CD4-positive, alpha-beta memory T cell (primary cell): ENCODE measurements at regions of chr1 and their contacts with region 1.

Region 1: DNA sequence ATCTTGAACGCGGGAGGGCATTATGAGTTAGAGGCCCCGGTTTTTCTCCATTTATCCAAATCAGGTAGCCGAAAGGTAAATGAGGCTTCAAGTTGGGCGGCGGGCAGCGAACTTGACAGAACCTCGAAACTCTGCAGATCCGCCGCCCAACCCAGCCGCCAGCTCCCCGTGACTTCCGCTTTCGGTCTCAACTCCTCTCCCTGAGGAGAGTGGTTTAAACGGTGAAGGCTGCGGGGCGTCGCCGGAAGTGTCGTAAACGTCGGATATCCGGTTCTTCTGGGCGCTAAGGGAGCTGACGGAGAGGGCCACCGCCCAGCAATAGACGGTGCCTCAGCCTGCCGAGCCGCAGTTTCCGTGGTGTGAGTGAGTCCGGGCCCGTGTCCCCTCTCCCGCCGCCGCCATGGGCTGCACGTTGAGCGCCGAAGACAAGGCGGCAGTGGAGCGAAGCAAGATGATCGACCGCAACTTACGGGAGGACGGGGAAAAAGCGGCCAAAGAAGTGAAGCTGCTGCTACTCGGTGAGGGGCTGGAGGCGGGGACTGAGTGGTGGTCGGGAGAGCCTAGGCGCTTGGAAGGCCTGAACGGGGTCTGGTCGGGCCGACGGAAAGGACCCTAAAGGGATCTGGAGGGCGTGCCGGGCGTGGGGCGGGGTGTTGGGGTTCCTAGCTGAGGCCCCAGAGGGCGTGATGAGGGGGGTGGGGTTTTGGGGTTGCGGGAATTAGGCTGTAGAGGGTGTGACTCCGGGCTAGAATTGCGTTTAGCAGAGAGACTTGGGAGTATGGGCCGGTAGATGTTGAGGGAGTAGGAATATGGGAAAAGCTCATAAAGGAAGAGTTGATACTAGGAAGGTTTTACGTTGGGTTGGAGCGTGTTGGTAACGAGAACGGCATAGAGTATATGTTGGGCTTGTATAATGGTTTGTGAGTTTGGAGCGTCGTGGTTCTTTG is at the start of gene GNAI3:
- DNase-seq: peak; percentile 94 to 99 (median 96)
- H3K4me3 ChIP-seq: peak within 1 kb of the TSS; percentile 94 to 99
- H3K4me3 Mint-ChIP-seq: peak within 1 kb of the TSS; percentile 93 to 100 (median 98)
- H3K27ac ChIP-seq: peak within 1 kb of the TSS; percentile 97
- H3K27ac Mint-ChIP-seq: peak within 1 kb of the TSS; percentile 92 to 100 (median 99)
- H3K4me1 ChIP-seq: peaks cover 60% of the 10 kb centered on the region
- H3K4me1 Mint-ChIP-seq: peaks cover 41 to 65% (median 49%) of the 10 kb centered on the region in 4 donors
- H3K27me3 ChIP-seq: no peaks in the 10 kb centered on the region
- H3K27me3 Mint-ChIP-seq: no peaks in the 10 kb centered on the region
- total RNA-seq, gene GNAI3: 7.7 to 8.1 TPM

Region 2: GRCh38 chr1:109426278-109427170 is 122.1 kb before region 1 on chr1 and contains the start of gene PSMA5:
- CTCF ChIA-PET with region 1: interaction called, 3 read pairs
- POLR2A ChIA-PET with region 1: interaction called, 22 read pairs
- intact Hi-C with region 1: loop called (anchors 1 kb)
- DNase-seq: peak; percentile 93 to 99 (median 96)
- H3K4me3 ChIP-seq: peak within 1 kb of the TSS; percentile 96 to 98
- H3K4me3 Mint-ChIP-seq: peak within 1 kb of the TSS; percentile 94 to 99 (median 98)
- H3K27ac ChIP-seq: peak within 1 kb of the TSS; percentile 87
- H3K27ac Mint-ChIP-seq: peak within 1 kb of the TSS; percentile 90 to 99 (median 98)
- H3K4me1 ChIP-seq: peaks cover 44% of the 10 kb centered on the region
- H3K4me1 Mint-ChIP-seq: peaks cover 22 to 50% (median 37%) of the 10 kb centered on the region in 4 donors
- H3K27me3 ChIP-seq: no peaks in the 10 kb centered on the region
- H3K27me3 Mint-ChIP-seq: no peaks in the 10 kb centered on the region
- total RNA-seq, gene PSMA5: 87.7 to 90.2 TPM

Region 3: GRCh38 chr1:109509176-109510134 is 39.1 kb before region 1 on chr1 and contains the start of gene AMIGO1:
- CTCF ChIA-PET with region 1: interaction called, 6 read pairs
- POLR2A ChIA-PET with region 1: interaction called, 12 read pairs
- intact Hi-C with region 1: no loop called
- DNase-seq: peak; percentile 65 to 73 (median 68)
- H3K4me3 ChIP-seq: peak within 1 kb of the TSS; percentile 55 to 82
- H3K4me3 Mint-ChIP-seq: peak within 1 kb of the TSS; percentile 92 to 95 (median 94)
- H3K27ac ChIP-seq: peak within 1 kb of the TSS; percentile 54
- H3K27ac Mint-ChIP-seq: peak within 1 kb of the TSS; percentile 85 to 97 (median 95)
- H3K4me1 ChIP-seq: peaks cover 59% of the 10 kb centered on the region
- H3K4me1 Mint-ChIP-seq: peaks cover 48 to 73% (median 60%) of the 10 kb centered on the region in 4 donors
- H3K27me3 ChIP-seq: no peaks in the 10 kb centered on the region
- H3K27me3 Mint-ChIP-seq: no peaks in the 10 kb centered on the region
- total RNA-seq, gene AMIGO1: 28.1 to 29.3 TPM

Region 4: DNA sequence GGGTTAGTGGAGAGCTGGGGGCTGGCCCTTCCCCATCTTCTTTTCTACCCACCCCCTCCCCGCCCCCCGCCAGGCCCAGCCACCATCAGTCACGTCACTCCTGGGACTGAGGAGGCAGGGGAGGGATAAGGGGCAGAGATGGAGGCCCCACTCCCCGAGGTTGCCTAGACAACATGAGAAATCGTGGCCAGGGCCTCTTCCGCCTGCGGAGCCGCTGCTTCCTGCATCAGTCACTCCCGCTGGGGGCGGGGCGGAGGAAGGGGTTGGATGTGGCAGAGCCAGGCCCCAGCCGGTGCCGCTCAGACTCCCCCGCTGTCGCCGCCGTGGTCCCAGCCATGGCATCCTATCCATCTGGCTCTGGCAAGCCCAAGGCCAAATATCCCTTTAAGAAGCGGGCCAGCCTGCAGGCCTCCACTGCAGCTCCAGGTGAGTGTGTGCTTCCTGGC is 72.3 kb after region 1 on chr1:
- CTCF ChIA-PET with region 1: interaction called, 314 read pairs
- POLR2A ChIA-PET with region 1: interaction called, 114 read pairs
- intact Hi-C with region 1: loop called (anchors 1 kb)
- DNase-seq: peak; percentile 96 to 99 (median 97)
- H3K4me3 ChIP-seq: peak overlapping the region; percentile 76 to 93
- H3K4me3 Mint-ChIP-seq: peak overlapping the region; percentile 92 to 99 (median 96)
- H3K27ac ChIP-seq: peak overlapping the region; percentile 96
- H3K27ac Mint-ChIP-seq: peak overlapping the region; percentile 91 to 99 (median 99)
- H3K4me1 ChIP-seq: peaks cover 72% of the 10 kb centered on the region
- H3K4me1 Mint-ChIP-seq: peaks cover 47 to 86% (median 58%) of the 10 kb centered on the region in 4 donors
- H3K27me3 ChIP-seq: no peaks in the 10 kb centered on the region
- H3K27me3 Mint-ChIP-seq: no peaks in the 10 kb centered on the region

Region 5: DNA sequence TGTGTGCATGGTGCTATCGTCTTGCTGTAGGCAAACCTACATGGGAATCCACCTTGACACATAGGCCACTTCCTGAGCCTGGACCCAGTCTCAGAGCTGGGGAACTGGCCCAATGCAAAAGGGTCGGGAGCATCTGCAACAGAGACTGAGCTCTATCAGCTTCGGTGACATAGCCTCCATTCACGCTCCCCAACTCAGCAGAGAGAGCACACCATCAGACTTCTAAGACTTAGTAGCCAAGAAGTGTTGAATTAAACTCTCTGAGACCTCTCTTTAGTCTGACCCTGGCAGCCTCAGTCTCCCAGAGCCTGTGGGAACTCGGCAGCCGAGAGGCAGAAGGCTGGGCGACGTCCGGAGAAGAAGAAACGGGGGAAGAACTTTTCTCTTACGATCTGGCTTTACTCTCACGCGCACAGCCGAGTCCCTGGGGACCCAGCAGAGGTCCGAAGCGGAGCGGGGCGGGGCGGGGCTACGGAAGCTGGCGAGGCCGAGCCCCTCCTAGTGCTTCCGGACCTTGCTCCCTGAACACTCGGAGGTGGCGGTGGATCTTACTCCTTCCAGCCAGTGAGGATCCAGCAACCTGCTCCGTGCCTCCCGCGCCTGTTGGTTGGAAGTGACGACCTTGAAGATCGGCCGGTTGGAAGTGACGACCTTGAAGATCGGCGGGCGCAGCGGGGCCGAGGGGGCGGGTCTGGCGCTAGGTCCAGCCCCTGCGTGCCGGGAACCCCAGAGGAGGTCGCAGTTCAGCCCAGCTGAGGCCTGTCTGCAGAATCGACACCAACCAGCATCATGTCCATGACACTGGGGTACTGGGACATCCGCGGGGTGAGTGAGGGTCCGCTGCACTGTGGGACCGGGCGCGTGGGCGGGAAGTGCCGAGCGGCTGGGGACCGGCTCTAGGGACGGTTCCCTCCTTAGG is 107.3 kb after region 1 on chr1 and contains the start of gene GSTM4:
- CTCF ChIA-PET with region 1: interaction called, 11 read pairs
- POLR2A ChIA-PET with region 1: interaction called, 10 read pairs
- intact Hi-C with region 1: no loop called
- DNase-seq: peak; percentile 19 to 60 (median 42)
- H3K4me3 ChIP-seq: peak within 1 kb of the TSS; percentile 49 to 70
- H3K4me3 Mint-ChIP-seq: peak within 1 kb of the TSS; percentile 89 to 98 (median 94)
- H3K27ac ChIP-seq: peak within 1 kb of the TSS; percentile 52
- H3K27ac Mint-ChIP-seq: peak within 1 kb of the TSS; percentile 72 to 95 (median 89)
- H3K4me1 ChIP-seq: peaks cover 12% of the 10 kb centered on the region
- H3K4me1 Mint-ChIP-seq: peaks cover 7 to 25% (median 15%) of the 10 kb centered on the region in 4 donors
- H3K27me3 ChIP-seq: peaks cover 4% of the 10 kb centered on the region
- H3K27me3 Mint-ChIP-seq: peaks cover 1 to 7% of the 10 kb centered on the region in 2 donors
- total RNA-seq, gene GSTM4: 12.6 to 14.2 TPM

Region 6: DNA sequence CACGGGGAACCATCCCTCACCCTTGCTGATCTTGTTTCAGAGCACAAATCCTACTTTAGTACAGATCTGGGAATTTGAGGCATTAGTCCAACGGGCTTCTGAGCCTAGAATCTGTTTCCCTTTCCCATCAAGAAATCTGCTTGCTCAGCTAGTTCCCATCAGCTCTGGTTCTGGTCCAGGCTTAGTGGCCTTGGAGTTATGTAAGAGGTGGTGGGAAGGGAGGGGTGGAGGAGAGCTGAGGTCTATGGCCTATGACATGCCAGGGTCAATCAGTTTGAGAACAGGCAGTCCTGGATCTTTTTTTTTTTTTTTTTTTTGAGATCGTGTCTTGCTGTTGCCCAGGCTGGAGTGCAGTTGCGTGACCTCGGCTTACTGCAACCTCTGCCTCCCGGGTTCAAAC is 143.2 kb after region 1 on chr1:
- CTCF ChIA-PET with region 1: no interaction called
- POLR2A ChIA-PET with region 1: no interaction called
- intact Hi-C with region 1: no loop called
- DNase-seq: no peak
- H3K4me3 ChIP-seq: no peak overlapping the region
- H3K4me3 Mint-ChIP-seq: no peak overlapping the region
- H3K27ac ChIP-seq: no peak overlapping the region
- H3K27ac Mint-ChIP-seq: no peak overlapping the region
- H3K4me1 ChIP-seq: no peaks in the 10 kb centered on the region
- H3K4me1 Mint-ChIP-seq: peaks cover 0 to 18% (median 11%) of the 10 kb centered on the region in 4 donors
- H3K27me3 ChIP-seq: no peaks in the 10 kb centered on the region
- H3K27me3 Mint-ChIP-seq: no peaks in the 10 kb centered on the region

Region 7: GRCh38 chr1:110338886-110339406 is 790.4 kb after region 1 on chr1 and contains the start of gene RBM15:
- CTCF ChIA-PET with region 1: no interaction called
- POLR2A ChIA-PET with region 1: interaction called, 8 read pairs
- intact Hi-C with region 1: loop called (anchors 2 kb)
- DNase-seq: peak; percentile 98 to 100 (median 99)
- H3K4me3 ChIP-seq: peak within 1 kb of the TSS; percentile 55 to 89
- H3K4me3 Mint-ChIP-seq: no peak within 1 kb of the TSS
- H3K27ac ChIP-seq: peak within 1 kb of the TSS; percentile 94
- H3K27ac Mint-ChIP-seq: peak within 1 kb of the TSS in 1 of 7 donors; percentile 98
- H3K4me1 ChIP-seq: peaks cover 56% of the 10 kb centered on the region
- H3K4me1 Mint-ChIP-seq: peaks cover 30 to 63% (median 52%) of the 10 kb centered on the region in 4 donors
- H3K27me3 ChIP-seq: no peaks in the 10 kb centered on the region
- H3K27me3 Mint-ChIP-seq: no peaks in the 10 kb centered on the region
- total RNA-seq, gene RBM15: 47.7 to 51.4 TPM